Activated CD4-positive, alpha-beta T cell treated with anti-CD3 and anti-CD28 coated beads for 36 hours (primary cell): ENCODE measurements at regions of chr17 and their contacts with region 1.

Region 1: DNA sequence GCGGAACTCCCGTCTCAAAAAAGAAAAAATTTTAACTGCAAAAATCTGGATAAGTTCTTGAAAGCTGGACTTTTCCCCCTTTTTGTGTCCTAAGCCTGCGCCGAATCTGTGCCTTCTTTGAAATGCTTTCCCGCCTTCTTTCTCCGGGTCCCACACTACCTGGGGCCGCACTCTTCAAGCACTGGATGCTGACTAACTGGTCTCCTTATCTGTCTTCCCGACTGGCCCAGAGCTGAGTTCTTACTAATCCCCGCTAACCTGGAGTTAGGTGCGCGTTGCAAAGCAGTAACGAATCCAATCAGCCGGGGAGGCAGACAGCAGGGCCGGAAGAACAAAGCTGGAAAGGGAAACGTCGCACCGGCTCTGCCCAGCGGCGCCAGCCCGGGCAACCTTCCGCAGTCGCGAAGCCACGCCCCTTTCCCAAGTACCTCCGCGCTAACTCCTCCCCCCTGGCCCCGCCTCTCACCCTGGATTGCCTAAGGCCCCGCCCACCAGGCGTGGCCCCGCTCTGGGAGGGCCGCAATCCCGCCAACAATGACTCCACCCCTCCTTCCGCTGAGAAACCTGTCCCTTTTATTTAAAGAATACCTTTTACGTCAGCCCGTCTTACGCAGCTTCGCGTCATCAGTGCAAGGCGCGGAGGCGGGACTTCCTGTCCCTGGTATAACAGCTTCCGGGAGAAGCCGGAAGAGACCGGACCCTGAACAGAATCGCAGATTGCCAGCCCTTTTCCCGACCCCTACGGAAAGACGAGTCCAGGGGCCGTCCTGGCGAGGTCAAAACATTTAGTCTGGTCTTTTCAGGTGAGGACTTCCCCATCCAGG is at the start of gene TMUB2:
- DNase-seq: peak; percentile 100
- ATAC-seq: peak; percentile 92
- H3K4me3 Mint-ChIP-seq: peak within 1 kb of the TSS; percentile 99
- H3K27ac Mint-ChIP-seq: peak within 1 kb of the TSS; percentile 100
- H3K4me1 Mint-ChIP-seq: peaks cover 32% of the 10 kb centered on the region
- H3K27me3 Mint-ChIP-seq: no peaks in the 10 kb centered on the region
- total RNA-seq, gene TMUB2: 19.8 to 20.3 TPM

Region 2: GRCh38 chr17:44070455-44071197 is 115.9 kb before region 1 on chr17 and contains the start of gene G6PC3:
- CTCF ChIA-PET with region 1: no interaction called
- POLR2A ChIA-PET with region 1: interaction called, 4 read pairs
- intact Hi-C with region 1: loop called in 1 of 2 experiments (anchors 1 kb)
- DNase-seq: peak; percentile 93
- ATAC-seq: peak; percentile 68
- H3K4me3 Mint-ChIP-seq: peak within 1 kb of the TSS; percentile 93
- H3K27ac Mint-ChIP-seq: peak within 1 kb of the TSS; percentile 98
- H3K4me1 Mint-ChIP-seq: peaks cover 30% of the 10 kb centered on the region
- H3K27me3 Mint-ChIP-seq: no peaks in the 10 kb centered on the region
- total RNA-seq, gene G6PC3: 21.3 to 22.0 TPM

Region 3: DNA sequence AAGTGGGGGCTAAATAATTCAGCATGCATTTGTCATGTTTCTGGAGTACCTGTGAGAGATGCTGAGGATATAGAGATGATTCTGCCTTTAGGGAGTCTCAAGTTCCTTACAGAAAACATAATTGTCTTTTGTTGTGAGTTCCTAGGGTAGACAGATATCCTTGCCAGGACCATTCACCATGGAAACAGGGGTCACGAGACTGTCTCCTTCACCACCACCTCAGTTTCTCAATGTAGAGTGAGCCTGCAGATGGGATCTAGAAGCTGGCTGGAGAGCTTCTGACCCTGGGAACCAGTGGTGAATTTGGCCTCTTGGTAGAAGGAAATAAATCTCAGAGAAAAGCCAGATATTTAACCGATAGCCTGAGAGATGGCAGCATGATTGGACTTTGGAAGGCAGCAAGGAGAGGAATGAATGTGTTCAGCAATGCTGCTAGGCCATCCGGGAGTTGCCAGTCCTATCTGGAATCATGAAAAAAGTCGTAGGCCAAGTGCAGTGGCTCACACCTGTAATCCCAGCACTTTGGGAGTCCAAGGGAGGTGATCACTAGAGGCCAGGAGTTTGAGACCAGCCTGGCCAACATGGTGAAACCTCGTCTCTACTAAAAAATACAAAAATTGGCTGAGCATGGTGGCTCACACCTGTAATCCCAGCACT is 55.7 kb before region 1 on chr17:
- CTCF ChIA-PET with region 1: no interaction called
- POLR2A ChIA-PET with region 1: no interaction called
- intact Hi-C with region 1: no loop called
- DNase-seq: no peak
- ATAC-seq: no peak
- H3K4me3 Mint-ChIP-seq: no peak overlapping the region
- H3K27ac Mint-ChIP-seq: no peak overlapping the region
- H3K4me1 Mint-ChIP-seq: no peaks in the 10 kb centered on the region
- H3K27me3 Mint-ChIP-seq: no peaks in the 10 kb centered on the region

Region 4: DNA sequence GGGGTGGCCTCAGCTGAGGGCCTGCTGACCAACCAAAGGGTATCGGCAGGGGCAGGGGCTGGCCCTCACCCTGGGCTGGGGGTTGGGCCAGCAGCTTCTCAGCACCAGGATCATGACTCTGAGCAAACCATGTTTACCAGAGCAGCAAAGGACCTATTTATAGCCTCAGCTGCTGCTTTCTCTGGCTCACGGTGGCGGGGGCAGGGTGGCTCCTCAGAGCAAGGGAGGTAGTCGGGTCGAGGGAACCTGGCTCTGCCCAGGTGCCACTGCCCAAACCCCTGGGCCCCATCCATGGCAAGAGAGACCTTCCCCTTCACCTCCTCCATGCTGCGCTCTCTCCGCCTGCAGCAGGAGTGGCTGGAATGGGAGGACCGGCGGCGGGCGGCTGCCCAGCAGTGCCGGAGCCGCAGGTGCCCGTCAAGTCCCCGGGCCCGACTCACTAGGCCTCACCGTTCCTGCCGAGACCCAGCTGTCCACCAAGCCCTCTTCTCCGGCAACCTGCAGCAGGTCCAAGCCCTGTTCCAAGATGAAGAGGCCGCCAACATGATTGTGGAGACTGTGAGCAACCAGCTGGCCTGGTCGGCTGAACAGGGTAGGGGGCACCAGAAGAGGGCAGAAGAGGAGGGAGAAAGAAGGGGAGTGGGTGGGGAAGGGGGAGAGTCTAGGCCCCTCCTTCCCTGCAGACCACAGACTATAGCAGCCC is 15.9 kb before region 1 on chr17 and contains the start of gene ASB16:
- CTCF ChIA-PET with region 1: interaction called, 12 read pairs
- POLR2A ChIA-PET with region 1: interaction called, 3 read pairs
- intact Hi-C with region 1: no loop called
- DNase-seq: no peak
- ATAC-seq: no peak
- H3K4me3 Mint-ChIP-seq: no peak within 1 kb of the TSS
- H3K27ac Mint-ChIP-seq: no peak within 1 kb of the TSS
- H3K4me1 Mint-ChIP-seq: peaks cover 8% of the 10 kb centered on the region
- H3K27me3 Mint-ChIP-seq: no peaks in the 10 kb centered on the region
- total RNA-seq, gene ASB16: 0.14 TPM

Region 5: GRCh38 chr17:44218344-44219107 is 32.0 kb after region 1 on chr17:
- CTCF ChIA-PET with region 1: interaction called, 13 read pairs
- POLR2A ChIA-PET with region 1: interaction called, 7 read pairs
- intact Hi-C with region 1: loop called in 1 of 2 experiments (anchors 1 kb)
- DNase-seq: peak; percentile 93
- ATAC-seq: peak; percentile 43
- H3K4me3 Mint-ChIP-seq: peak overlapping the region; percentile 99
- H3K27ac Mint-ChIP-seq: peak overlapping the region; percentile 99
- H3K4me1 Mint-ChIP-seq: peaks cover 51% of the 10 kb centered on the region
- H3K27me3 Mint-ChIP-seq: no peaks in the 10 kb centered on the region

Region 6: DNA sequence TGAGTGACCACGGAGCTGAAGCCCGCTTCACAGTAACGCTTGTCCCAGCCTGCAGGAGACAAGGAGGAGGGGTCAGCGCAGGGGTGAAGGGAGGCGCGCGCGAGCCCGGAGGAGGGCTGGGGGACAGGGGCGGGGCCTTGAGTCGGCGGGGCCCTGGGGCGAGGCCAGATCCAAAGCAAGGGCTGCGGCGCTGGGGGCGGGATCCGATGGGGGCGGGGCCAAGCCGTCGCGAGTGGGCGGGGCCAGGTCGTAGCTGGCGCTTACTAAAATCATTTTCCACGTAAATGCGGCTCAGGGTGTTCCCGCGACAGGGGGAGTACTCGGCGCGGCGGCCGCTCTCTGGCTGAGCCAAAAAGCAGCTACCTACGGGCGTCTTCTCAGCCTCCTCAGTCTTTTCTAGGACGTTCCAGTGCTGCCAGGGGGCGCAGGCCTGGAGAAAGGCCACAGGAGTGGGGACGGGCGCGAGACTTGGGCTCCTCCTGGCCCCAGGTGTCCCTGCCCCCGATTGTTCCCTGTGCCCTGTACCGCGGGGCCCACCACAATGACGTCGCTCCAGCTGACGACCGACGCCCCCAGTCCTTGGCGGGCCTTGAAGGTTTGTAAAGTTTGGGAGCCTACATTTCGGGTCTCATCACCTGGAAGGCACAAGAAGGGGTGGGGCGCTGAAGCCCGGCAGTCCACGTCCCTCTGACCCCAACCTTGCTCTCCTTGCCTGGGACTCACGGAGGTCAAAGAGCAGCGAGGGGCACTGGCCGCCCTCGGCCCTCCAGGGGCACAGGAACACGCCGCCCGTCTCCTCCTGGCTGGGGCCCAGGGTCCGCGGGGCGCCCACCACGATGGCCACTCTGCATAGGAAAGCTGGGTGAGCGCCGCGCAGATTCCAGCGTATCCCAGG is 199.0 kb after region 1 on chr17:
- CTCF ChIA-PET with region 1: no interaction called
- POLR2A ChIA-PET with region 1: no interaction called
- intact Hi-C with region 1: loop called in 1 of 2 experiments (anchors 1 kb)
- DNase-seq: peak; percentile 96
- ATAC-seq: peak; percentile 96
- H3K4me3 Mint-ChIP-seq: peak overlapping the region; percentile 62
- H3K27ac Mint-ChIP-seq: peak overlapping the region; percentile 21
- H3K4me1 Mint-ChIP-seq: peaks cover 12% of the 10 kb centered on the region
- H3K27me3 Mint-ChIP-seq: peaks cover 22% of the 10 kb centered on the region